ENCODE measurements at regions of chr5 and their contacts with region 1.

Region 1: GRCh38 chr5:41869739-41870626 is at the start of gene OXCT1:
- H3K4me3 Mint-ChIP-seq: peak within 1 kb of the TSS; percentile 87
- H3K27ac Mint-ChIP-seq: peak within 1 kb of the TSS; percentile 71
- H3K4me1 Mint-ChIP-seq: peaks cover 19% of the 10 kb centered on the region
- H3K27me3 Mint-ChIP-seq: peaks cover 19% of the 10 kb centered on the region

Region 2: DNA sequence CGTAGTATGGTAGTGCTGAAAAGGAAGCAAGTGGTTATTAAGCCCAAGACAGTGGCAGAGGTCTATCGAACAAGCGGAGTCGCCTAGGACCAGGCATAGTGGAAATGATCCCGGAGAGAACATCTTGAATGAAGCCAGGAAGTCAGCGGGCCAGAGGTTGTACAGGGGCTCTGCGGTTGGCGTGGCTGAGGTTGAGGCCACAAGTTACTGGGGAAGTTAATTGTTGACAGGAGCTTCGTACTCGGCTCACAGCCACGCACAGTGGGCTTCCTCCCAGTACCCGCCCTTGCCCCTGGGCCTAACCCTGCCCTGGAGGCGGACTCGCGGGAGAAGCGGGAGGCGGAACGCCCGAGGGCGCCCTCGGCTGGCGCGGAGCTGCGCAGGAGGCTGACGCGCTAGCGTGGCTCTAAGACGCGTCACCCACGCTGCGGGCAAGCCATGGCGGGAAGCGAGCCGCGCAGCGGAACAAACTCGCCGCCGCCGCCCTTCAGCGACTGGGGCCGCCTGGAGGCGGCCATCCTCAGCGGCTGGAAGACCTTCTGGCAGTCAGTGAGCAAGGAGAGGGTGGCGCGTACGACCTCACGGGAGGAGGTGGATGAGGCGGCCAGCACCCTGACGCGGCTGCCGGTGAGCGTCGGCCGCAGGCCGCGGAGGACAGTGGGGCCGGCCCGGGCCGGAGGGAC is 55.0 kb after region 1 on chr5 and contains the start of gene FBXO4:
- intact Hi-C with region 1: loop called (anchors 2 kb)
- H3K4me3 Mint-ChIP-seq: peak within 1 kb of the TSS; percentile 93
- H3K27ac Mint-ChIP-seq: peak within 1 kb of the TSS; percentile 99
- H3K4me1 Mint-ChIP-seq: peaks cover 28% of the 10 kb centered on the region
- H3K27me3 Mint-ChIP-seq: no peaks in the 10 kb centered on the region

Region 3: GRCh38 chr5:41940641-41941040 is 70.7 kb after region 1 on chr5:
- intact Hi-C with region 1: no loop called
- H3K4me3 Mint-ChIP-seq: no peak overlapping the region
- H3K27ac Mint-ChIP-seq: no peak overlapping the region
- H3K4me1 Mint-ChIP-seq: no peaks in the 10 kb centered on the region
- H3K27me3 Mint-ChIP-seq: no peaks in the 10 kb centered on the region

Measured in dendritic cell treated with granulocyte-macrophage colony-stimulating factor and Interleukin-4, amounts not matched to agents 40 ng/mL and 50 ng/mL, for 4 days (primary cell).